Motor neuron (in vitro differentiated cells): ENCODE measurements at regions of chr13 and their contacts with region 1.

Region 1: DNA sequence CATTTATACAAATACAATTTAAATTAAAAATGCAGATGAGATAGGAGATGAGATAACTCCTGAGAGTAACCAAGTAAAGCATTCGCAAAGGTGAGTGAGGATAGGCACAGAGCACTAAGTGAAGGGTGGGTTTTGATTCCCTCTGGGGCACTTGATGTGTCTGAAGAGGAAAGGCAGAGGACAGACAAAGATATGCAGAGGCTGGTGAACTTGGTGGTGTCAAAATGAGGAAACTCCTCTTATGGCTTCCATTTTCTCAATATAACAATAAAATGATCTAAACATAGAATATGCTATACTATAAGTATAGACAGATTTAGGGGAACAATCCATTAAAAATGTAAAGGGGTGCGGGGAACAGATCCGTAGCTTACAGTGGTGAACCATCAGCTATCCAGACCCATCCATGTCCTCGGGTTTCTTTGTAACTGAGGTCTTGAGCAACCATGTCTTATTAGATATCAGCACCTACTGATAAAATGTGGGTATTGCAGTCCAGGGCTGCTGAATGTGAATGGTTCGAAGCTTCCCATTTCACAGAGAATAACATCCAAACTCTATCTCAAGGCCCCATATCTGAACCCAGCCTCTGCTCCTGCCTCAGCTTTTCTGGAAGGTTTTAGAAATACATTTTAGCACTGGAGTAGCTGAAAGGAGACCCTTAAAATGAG is 73.9 kb upstream of the SLC10A2 start:
- ATAC-seq: peak in 2 of 8 experiments; percentile 39 to 82
- H3K4me3 ChIP-seq: no peak overlapping the region
- H3K27ac ChIP-seq: no peak overlapping the region
- H3K4me1 ChIP-seq: peaks cover 0 to 20% of the 10 kb centered on the region in 2 donors

Region 2: DNA sequence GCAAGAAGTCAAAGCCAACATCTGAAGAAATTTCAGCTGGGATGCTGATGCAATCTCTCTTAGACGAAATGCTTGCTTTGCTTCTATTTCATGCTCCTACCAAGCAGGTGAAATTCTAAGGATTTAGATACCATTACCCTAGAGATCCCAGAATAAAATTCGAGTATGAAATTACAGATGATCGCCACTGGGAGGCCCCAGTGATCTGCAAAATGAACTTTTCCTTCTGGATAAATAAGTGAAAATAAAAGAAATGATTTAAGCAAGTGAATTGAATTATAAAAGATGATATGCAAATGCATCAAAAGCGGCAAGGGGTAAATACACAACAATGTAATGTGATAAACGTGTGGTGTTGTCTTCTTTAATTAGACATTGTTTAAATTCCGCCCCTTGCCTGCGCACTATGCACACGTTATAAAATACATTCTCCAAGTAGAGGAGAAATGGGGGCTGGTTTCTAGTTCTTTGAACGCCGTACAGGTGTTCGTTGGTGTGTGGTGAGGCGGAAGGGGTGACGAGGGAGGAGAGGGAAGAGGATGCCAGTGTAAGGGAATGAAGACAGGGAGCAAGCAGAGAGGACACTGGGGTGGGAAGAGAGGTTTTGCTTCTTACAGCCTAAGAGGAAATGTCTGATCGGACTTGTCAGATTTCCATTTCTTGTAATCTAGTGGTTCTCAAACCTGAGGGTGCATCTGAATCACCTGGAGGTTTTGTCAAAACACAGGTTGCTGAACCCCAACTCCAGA is 236.3 kb before region 1 on chr13:
- in situ Hi-C with region 1: loop called in 1 of 9 experiments (anchors 25 kb)
- ATAC-seq: peak in 1 of 8 experiments; percentile 30
- H3K4me3 ChIP-seq: no peak overlapping the region
- H3K27ac ChIP-seq: no peak overlapping the region
- H3K4me1 ChIP-seq: peaks cover 0 to 9% of the 10 kb centered on the region in 2 donors

Region 3: DNA sequence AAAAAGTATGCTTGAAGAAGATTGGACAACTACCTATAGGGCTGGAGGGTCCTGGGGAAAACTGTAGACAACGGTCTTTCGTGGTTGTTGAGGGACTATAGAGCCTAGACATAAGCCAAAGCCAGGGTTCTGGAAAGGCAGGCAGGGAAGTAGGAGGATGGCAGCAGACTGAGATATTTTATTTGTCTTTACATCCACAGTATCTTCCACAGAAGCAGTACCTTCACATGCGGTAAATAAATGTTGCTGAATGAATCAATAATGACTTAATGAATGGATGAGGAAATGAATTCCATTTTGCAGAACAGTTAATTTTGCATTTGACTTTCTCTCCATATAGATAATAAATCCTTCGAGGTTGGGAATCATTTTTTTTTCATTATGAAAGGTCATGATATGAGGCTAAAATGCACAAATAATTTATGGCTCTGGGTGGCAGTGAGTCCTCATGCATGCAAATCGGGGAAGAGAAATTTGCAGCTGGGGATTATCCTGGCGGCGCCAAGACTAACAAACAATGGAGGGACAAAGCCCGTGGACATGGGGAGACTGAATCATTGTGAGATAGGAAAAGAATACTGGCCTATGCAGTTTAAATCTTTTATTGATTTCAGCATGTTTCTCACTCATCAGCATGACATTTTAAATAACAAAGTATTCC is 192.3 kb before region 1 on chr13:
- in situ Hi-C with region 1: loop called in 1 of 9 experiments (anchors 25 kb)
- ATAC-seq: peak in 7 of 8 experiments; percentile 45 to 97 (median 95)
- H3K4me3 ChIP-seq: no peak overlapping the region
- H3K27ac ChIP-seq: no peak overlapping the region
- H3K4me1 ChIP-seq: peaks cover 0 to 42% of the 10 kb centered on the region in 2 donors